ENCODE measurements at regions of chr1 and their contacts with region 1.

Region 1: GRCh38 chr1:150420560-150421265 is 56.8 kb downstream of the RPRD2 start:
- DNase-seq: no peak
- H3K4me3 Mint-ChIP-seq: no peak overlapping the region
- H3K27ac Mint-ChIP-seq: no peak overlapping the region
- H3K4me1 Mint-ChIP-seq: peaks cover 19% of the 10 kb centered on the region
- H3K27me3 Mint-ChIP-seq: no peaks in the 10 kb centered on the region

Region 2: GRCh38 chr1:150387200-150387599 is 33.5 kb before region 1 on chr1:
- CTCF ChIA-PET with region 1: interaction called, 4 read pairs
- intact Hi-C with region 1: loop called (anchors 5 kb)
- DNase-seq: no peak
- H3K4me3 Mint-ChIP-seq: no peak overlapping the region
- H3K27ac Mint-ChIP-seq: peak overlapping the region; percentile 50
- H3K4me1 Mint-ChIP-seq: peaks cover 52% of the 10 kb centered on the region
- H3K27me3 Mint-ChIP-seq: no peaks in the 10 kb centered on the region

Measured in activated naive CD4-positive, alpha-beta T cell treated with anti-CD3 and anti-CD28 coated beads for 36 hours (primary cell).